ENCODE measurements at regions of chr9 and their contacts with region 1.

Region 1: DNA sequence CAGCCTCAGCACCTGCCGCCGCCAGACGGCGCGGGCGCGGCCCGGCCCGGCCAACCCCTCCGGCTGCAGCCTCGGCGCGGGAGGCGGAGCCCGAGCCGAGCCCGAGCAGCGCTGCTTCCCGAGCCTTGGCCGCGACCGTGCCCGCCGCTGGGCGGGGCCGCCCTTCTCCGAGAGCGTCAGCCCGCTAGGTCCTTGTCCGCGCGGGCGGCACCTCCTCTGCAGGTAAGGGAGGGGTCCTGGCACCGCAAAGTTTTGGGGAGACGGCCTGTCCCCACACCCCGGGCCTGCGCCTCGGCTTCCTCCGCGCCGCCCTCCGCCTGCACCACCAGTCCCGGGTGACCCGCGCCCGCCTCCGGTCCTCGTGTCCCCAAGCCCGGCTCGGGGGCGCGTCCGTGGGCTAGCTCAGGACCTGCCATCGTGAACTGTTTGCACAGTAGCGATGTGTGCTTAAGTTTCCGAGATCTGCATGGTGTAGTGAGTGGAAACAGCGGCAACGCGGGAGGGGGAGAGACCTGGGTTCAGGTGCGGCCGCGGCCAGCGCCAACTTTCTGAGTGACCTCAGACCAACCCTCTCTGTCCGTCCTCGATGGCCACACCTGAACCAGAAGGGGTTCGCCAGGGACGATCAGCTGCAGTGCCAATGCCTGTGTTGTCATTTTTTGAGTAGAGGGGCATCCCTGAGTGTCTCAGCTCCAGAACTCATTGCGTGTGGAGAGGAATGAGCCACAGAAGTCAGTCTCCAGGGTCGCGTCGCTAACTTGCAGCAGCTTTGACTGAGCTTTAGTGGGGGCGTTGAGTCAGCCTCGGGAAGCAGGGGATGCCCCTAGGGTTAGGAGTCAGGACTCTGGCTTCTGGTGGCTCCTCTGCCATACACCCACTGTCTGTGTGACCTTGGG is at the start of gene FRMPD1:
- DNase-seq: peak; percentile 74
- H3K4me3 ChIP-seq: peak within 1 kb of the TSS; percentile 41 to 70 (median 58)
- H3K27ac ChIP-seq: no peak within 1 kb of the TSS
- H3K4me1 ChIP-seq: peaks cover 0 to 12% (median 8%) of the 10 kb centered on the region in 4 donors
- H3K27me3 ChIP-seq: peaks cover 0 to 36% (median 20%) of the 10 kb centered on the region in 3 donors
- CTCF ChIP-seq: no peak
- EP300 ChIP-seq: no peak
- POLR2A ChIP-seq: no peak
- total RNA-seq, gene FRMPD1: 0.16 to 0.71 (median 0.34) TPM

Region 2: GRCh38 chr9:37617832-37618231 is 33.3 kb before region 1 on chr9:
- intact Hi-C with region 1: loop called (anchors 5 kb)
- DNase-seq: no peak
- H3K4me3 ChIP-seq: no peak overlapping the region
- H3K27ac ChIP-seq: no peak overlapping the region
- H3K4me1 ChIP-seq: no peaks in the 10 kb centered on the region
- H3K27me3 ChIP-seq: no peaks in the 10 kb centered on the region
- CTCF ChIP-seq: no peak
- EP300 ChIP-seq: no peak
- POLR2A ChIP-seq: no peak

Measured in sigmoid colon (tissue), 7 donors.